MCF 10A (cell line): ENCODE measurements at regions of chr13 and their contacts with region 1.

Region 1: DNA sequence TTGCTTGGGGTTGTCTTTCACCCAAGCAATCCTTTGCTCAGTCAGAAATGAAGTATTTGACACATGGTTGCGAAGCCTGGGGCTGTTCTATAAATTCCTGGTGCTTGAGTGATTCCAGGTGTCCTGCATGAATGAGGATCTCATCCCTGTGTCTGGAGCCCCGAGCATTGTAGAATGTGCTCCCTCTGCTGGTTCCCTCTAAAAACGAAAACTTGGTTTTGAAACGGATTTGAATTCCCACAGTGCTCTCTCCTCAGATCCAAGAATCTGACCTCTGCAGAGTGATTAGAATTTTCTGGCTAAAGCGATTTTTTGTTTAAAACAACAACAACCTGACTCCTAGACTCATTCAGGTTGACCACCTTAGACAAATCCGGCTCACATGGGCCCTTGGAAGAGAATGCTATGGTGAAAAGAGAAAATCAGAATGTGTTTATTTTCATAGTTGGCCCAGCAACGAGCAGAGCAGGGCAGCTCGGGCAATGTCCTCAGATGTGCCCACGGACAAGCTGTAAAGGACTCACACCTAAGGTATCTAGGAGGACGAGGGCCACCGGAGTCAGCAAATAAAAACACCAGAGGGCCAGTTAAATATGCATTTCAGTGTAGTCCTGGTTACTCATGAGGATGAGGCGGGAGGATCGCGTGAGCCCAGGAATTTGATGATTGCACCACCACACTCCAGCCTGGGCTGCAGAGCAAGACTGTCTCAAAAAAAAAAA is 8.7 kb upstream of the ATP12A start:
- DNase-seq: peak; percentile 82
- H3K4me3 Mint-ChIP-seq: peak overlapping the region; percentile 65
- H3K27ac Mint-ChIP-seq: peak overlapping the region; percentile 97
- H3K4me1 Mint-ChIP-seq: peaks cover 29% of the 10 kb centered on the region
- H3K27me3 Mint-ChIP-seq: no peaks in the 10 kb centered on the region
- CTCF ChIP-seq: peak; percentile 50

Region 2: GRCh38 chr13:24512197-24512907 is 159.2 kb before region 1 on chr13 and contains the start of gene PARP4:
- CTCF ChIA-PET with region 1: no interaction called
- POLR2A ChIA-PET with region 1: no interaction called
- intact Hi-C with region 1: loop called (anchors 5 kb)
- DNase-seq: peak; percentile 94
- H3K4me3 Mint-ChIP-seq: peak within 1 kb of the TSS; percentile 88
- H3K27ac Mint-ChIP-seq: peak within 1 kb of the TSS; percentile 90
- H3K4me1 Mint-ChIP-seq: peaks cover 16% of the 10 kb centered on the region
- H3K27me3 Mint-ChIP-seq: no peaks in the 10 kb centered on the region
- CTCF ChIP-seq: no peak
- total RNA-seq, gene PARP4: 30.9 and 34.3 TPM in 2 replicates

Region 3: GRCh38 chr13:24574847-24575246 is 96.7 kb before region 1 on chr13:
- CTCF ChIA-PET with region 1: interaction called, 13 read pairs
- POLR2A ChIA-PET with region 1: no interaction called
- intact Hi-C with region 1: loop called (anchors 2 kb)
- DNase-seq: no peak
- H3K4me3 Mint-ChIP-seq: no peak overlapping the region
- H3K27ac Mint-ChIP-seq: no peak overlapping the region
- H3K4me1 Mint-ChIP-seq: no peaks in the 10 kb centered on the region
- H3K27me3 Mint-ChIP-seq: no peaks in the 10 kb centered on the region
- CTCF ChIP-seq: no peak

Region 4: DNA sequence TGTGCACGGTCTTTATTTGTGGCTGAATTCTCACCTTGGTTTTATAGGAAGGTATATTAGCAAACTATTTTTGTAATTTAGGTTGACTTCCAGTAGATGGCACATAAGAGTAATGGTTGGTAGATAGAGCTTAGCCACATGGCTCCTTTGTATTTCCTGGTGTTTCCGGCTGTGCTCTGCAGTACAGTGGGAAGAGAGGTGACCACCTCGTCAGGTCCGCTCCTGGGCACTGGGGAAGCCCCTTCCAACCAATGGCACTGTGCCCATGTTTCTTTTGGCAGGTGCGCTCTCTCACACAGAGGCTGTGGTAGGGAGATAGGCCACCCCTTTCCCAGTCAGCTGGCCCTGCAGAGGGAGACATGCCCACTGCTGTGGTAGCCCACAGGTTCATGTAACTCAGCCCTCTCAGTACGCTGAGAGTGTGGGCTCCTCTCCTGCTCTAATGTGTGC is 65.6 kb before region 1 on chr13:
- CTCF ChIA-PET with region 1: interaction called, 34 read pairs
- POLR2A ChIA-PET with region 1: interaction called, 5 read pairs
- intact Hi-C with region 1: loop called (anchors 1 kb)
- DNase-seq: peak; percentile 43
- H3K4me3 Mint-ChIP-seq: no peak overlapping the region
- H3K27ac Mint-ChIP-seq: peak overlapping the region; percentile 64
- H3K4me1 Mint-ChIP-seq: no peaks in the 10 kb centered on the region
- H3K27me3 Mint-ChIP-seq: no peaks in the 10 kb centered on the region
- CTCF ChIP-seq: peak; percentile 22

Region 5: DNA sequence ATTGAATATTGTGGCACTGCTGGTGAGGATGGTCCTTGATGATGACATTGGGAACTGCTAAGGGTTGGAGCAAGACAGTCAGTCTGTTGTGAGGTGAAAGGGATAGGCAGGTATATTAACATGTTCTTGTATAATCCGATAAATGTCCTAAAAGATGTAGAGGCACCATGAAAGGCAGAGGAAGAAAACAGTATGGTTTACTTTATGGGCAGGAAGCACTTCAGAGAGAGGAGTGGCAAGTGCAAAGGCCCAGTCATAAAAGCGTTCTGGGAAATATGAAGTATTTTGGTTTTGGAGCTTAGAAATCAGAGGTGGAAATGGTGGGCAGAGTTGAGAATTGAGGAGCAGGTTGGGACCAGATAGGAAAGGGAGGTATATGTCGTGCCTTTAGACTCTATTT is 639.3 kb after region 1 on chr13:
- CTCF ChIA-PET with region 1: no interaction called
- POLR2A ChIA-PET with region 1: no interaction called
- intact Hi-C with region 1: no loop called
- DNase-seq: no peak
- H3K4me3 Mint-ChIP-seq: no peak overlapping the region
- H3K27ac Mint-ChIP-seq: peak overlapping the region; percentile 60
- H3K4me1 Mint-ChIP-seq: peaks cover 12% of the 10 kb centered on the region
- H3K27me3 Mint-ChIP-seq: no peaks in the 10 kb centered on the region
- CTCF ChIP-seq: no peak

Region 6: GRCh38 chr13:25732111-25732865 is 1060.7 kb after region 1 on chr13:
- CTCF ChIA-PET with region 1: no interaction called
- POLR2A ChIA-PET with region 1: no interaction called
- intact Hi-C with region 1: no loop called
- DNase-seq: no peak
- H3K4me3 Mint-ChIP-seq: no peak overlapping the region
- H3K27ac Mint-ChIP-seq: peak overlapping the region; percentile 44
- H3K4me1 Mint-ChIP-seq: peaks cover 30% of the 10 kb centered on the region
- H3K27me3 Mint-ChIP-seq: no peaks in the 10 kb centered on the region
- CTCF ChIP-seq: no peak